AG04450 (cell line): ENCODE measurements at regions of chr9 and their contacts with region 1.

Region 1: GRCh38 chr9:88596376-88596775 is 61.4 kb downstream of the NXNL2 start:
- DNase-seq: no peak
- H3K4me3 ChIP-seq: no peak overlapping the region
- H3K27ac ChIP-seq: no peak overlapping the region
- H3K27me3 ChIP-seq: no peaks in the 10 kb centered on the region
- CTCF ChIP-seq: no peak

Region 2: DNA sequence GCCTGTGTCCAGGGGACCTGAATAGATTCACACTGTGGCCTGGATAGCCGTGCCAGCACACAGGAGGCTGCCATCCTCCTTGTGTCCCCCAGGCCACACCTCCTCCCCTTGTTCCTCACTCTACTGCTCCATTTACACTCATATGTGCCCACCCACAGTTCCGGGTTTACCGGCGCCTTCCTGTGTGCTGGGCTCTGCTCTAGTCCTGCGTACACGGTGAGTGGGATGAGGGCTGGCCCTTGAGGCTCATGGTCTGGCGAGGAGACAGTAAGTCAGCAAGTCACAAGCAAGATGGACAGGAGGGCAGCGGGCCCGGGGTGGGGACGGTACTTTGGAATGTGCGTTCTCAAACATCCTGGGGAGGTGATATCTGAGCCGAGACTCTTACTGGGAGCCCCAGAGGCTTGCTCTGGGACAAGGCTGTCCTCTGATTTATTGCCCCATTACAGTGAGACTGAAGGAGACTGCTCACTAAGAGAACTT is 93.8 kb before region 1 on chr9:
- CTCF ChIA-PET with region 1: no interaction called
- POLR2A ChIA-PET with region 1: no interaction called
- DNase-seq: no peak
- H3K4me3 ChIP-seq: no peak overlapping the region
- H3K27ac ChIP-seq: no peak overlapping the region
- H3K27me3 ChIP-seq: no peaks in the 10 kb centered on the region
- CTCF ChIP-seq: no peak

Region 3: DNA sequence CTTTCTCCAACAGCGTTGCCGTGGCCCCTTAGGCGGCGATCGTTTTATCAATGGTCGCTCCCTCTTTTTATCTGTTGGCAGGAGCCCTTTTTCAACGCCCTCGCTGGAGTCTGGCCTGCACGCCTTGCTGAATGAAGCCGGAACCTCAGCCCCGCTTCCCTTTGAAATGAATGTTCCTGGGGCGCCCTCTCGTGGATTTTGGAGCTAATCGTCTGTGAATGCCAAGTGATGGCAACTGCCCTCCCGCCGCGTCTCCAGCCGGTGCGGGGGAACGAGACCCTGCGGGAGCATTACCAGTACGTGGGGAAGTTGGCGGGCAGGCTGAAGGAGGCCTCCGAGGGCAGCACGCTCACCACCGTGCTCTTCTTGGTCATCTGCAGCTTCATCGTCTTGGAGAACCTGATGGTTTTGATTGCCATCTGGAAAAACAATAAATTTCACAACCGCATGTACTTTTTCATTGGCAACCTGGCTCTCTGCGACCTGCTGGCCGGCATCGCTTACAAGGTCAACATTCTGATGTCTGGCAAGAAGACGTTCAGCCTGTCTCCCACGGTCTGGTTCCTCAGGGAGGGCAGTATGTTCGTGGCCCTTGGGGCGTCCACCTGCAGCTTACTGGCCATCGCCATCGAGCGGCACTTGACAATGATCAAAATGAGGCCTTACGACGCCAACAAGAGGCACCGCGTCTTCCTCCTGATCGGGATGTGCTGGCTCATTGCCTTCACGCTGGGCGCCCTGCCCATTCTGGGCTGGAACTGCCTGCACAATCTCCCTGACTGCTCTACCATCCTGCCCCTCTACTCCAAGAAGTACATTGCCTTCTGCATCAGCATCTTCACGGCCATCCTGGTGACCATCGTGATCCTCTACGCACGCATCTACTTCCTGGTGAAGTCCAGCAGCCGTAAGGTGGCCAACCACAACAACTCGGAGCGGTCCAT is 404.9 kb after region 1 on chr9:
- CTCF ChIA-PET with region 1: interaction called, 10 read pairs
- POLR2A ChIA-PET with region 1: interaction called, 3 read pairs
- DNase-seq: peak; percentile 59
- H3K4me3 ChIP-seq: 0 out of 2 replicates have a peak overlapping the region, but pooled peaks have one; percentile 4
- H3K27ac ChIP-seq: peak overlapping the region; percentile 39
- H3K27me3 ChIP-seq: no peaks in the 10 kb centered on the region
- CTCF ChIP-seq: peak; percentile 82